GM10248 (cell line): ENCODE measurements at regions of chr2 and their contacts with region 1.

Region 1: DNA sequence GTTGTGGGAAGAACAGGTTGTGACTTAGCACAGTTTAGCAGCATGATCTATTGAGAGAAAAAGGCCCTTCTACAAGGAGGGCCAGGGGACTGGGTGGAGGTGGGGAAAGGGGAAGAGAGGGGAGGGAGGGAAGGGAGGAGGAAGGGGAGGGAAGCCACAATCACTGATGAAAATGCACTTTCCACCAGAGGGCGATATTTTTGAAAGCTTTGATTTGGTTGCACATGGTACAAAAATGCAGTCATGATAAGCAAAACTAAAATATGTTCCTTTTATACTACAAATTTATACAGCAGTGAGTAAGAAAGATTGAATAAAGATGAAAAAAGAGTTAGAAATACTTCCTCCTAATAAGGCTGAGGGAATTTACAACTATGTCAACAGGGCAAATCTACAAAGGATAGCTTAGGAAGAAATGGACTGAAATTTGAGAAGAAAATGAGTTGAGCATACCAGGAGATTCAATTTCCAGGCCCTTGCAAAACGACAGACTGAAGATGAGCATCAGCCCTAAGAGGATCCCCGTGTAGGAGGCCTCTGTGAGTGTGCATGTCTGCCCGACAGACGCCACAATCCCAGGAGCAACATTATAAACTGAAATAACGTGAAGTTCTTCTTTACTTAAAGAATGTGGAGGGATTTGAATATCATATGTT is 17.2 kb downstream of the SH3YL1 start:
- DNase-seq: peak; percentile 24
- CTCF ChIP-seq: peak; percentile 46

Region 2: GRCh38 chr2:269356-270030 is 22.9 kb after region 1 on chr2:
- CTCF ChIA-PET with region 1: interaction called, 13 read pairs
- POLR2A ChIA-PET with region 1: no interaction called
- DNase-seq: no peak
- CTCF ChIP-seq: no peak

Region 3: GRCh38 chr2:274503-274902 is 27.9 kb after region 1 on chr2:
- CTCF ChIA-PET with region 1: interaction called, 13 read pairs
- POLR2A ChIA-PET with region 1: no interaction called
- DNase-seq: no peak
- CTCF ChIP-seq: peak; percentile 23

Region 4: DNA sequence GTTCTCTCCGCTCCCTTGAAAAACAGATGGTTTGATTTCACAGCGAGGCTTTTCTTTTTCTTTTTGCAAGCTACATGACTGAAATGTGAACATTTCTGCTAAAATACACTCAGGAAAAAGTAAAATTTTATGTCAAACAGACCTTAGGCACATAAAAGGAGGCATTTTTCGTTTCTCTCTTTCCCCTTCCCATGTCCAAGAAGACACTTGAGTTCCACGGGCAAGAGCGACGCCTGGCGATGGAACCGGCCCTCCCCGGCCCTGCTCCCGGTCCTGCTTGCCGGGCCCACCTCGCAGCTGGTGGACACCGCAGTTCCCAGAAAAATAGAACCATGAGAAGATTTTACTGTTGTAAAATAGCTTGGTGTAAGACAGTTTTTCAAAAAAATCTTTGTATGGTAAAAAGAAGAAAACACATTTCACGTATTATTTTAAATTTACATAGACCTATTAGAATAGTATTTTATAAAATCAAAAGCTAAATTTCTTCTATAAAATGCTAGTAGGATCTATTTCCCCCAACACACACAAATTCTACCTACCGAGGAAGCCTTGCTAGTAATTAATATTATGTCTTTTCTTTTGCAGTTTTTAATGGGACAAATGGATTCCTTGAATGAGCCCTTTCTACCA is 43.6 kb after region 1 on chr2:
- CTCF ChIA-PET with region 1: interaction called, 14 read pairs
- POLR2A ChIA-PET with region 1: no interaction called
- DNase-seq: peak; percentile 53
- CTCF ChIP-seq: peak; percentile 86

Region 5: DNA sequence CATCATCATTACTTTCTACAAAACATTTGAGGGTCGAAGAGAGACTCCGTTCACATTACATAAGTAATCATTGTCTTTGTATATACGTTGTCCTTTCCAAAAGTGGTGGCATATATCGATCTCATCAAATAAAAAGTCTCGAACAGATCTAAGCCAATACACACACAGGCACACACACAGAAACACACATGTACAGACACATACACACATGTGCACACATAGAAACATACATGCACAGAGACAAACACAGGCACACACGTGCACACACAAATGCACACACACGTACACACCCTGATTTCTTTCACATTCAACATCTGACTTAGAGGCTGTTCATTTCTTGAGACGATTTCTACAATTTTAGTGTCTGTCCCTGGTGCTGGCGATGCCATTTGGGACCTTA is 58.7 kb after region 1 on chr2:
- CTCF ChIA-PET with region 1: no interaction called
- POLR2A ChIA-PET with region 1: no interaction called
- DNase-seq: no peak
- CTCF ChIP-seq: no peak

Region 6: DNA sequence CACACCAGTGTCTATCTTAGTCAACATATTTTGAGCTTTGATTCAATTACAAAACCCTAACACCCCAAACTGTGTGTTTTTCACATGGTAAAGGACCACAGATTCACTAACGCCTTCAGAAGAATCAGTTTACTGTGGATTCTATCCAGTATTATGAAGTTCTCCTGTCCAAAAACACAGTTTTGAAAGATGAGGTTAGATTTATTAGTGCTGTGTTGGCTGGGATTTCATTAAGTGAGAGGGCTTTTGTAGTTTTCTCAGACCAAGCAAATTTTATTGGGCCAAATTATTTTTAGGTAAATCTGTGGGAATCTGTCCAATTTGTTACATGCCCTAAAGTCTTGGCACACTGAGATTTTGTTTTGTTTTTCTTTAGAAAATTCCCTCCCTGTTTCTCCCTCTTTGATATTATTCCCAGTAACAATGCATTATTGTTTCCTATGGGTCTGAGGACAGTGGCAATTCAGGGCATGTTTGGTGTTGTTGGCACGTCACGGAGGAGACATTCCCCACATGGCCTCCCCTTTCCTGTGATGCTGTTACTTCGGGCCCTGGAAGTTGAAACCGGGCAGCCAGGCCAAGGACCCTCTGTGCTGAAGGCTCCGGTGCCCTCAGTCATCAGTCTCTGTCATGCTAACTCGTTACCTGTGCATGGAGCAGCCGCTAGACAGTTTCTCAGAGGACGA is 128.8 kb after region 1 on chr2:
- CTCF ChIA-PET with region 1: no interaction called
- POLR2A ChIA-PET with region 1: no interaction called
- DNase-seq: no peak
- CTCF ChIP-seq: no peak